Caco-2 (cell line): ENCODE measurements at regions of chr19 and their contacts with region 1.

Region 1: DNA sequence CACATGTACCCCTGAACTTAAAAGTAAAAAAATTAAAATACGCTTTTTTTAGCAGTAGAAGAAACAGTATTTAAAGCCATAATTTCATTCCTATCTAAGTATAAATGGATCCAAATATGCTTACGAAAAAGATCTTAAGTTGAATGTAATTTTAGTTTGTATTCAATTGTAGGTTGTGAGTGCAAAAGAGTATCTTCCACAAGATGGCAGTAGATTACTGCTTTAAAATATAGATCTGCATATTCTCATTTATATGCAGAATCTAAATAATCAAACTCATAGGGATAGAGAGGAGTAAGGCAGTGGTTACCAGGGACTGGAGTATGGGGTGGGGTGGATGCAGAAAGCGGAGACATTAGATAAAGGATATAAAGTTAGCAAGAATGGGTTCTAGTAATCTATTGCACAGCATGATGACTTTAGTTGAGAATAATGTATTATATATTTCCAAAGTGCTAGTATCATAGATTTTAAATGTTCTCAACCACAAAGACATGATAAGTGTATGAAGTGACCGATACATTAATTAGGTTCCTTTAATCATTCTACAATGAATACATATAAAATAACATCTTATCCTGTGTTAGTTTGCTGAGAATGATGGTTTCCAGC is 14.2 kb downstream of the OR7A17 start:
- DNase-seq: no peak
- H3K4me3 ChIP-seq: no peak overlapping the region
- H3K4me3 Mint-ChIP-seq: no peak overlapping the region
- H3K27ac Mint-ChIP-seq: no peak overlapping the region
- H3K4me1 ChIP-seq: no peaks in the 10 kb centered on the region
- H3K4me1 Mint-ChIP-seq: no peaks in the 10 kb centered on the region
- H3K27me3 ChIP-seq: no peaks in the 10 kb centered on the region
- H3K27me3 Mint-ChIP-seq: peaks cover 5% of the 10 kb centered on the region
- CTCF ChIP-seq: peak; percentile 26 to 31

Region 2: DNA sequence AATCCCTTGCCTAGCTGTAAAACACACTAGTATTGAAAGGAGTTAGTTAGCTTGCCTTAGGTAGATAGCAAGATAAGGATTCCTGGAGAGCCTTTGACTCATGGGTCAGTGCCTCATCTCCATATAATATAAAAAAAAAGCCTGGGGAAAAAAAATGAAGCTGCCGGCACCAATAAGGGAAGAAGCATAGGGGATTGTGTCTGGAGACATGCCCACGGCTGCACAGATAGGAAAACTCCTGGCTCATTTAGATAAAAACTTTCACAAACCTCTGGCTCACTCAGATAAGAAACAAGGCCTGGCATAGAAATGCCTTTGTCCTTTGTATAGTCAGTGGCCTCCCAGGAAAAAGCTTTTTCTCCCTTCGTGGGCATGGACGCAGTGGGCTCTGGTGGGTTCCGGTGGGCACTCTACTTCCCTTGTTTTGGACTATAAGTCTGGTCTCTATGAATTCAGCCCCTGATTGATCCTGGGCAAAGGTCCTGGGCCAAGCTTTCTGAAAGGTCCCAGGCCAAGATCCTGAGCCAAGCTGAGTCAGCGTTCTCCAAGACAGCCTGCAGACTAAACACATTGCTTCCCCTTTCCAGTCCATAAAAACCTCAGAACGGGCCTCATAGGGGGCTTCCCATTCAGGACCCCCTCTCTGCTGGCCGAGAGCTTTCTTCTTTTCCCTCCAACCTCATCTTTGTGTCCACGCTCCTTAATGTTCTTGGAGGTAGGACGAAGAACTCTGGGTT is 19.1 kb after region 1 on chr19:
- CTCF ChIA-PET with region 1: no interaction called
- POLR2A ChIA-PET with region 1: no interaction called
- intact Hi-C with region 1: loop called (anchors 1 kb)
- DNase-seq: no peak
- H3K4me3 ChIP-seq: no peak overlapping the region
- H3K4me3 Mint-ChIP-seq: no peak overlapping the region
- H3K27ac Mint-ChIP-seq: no peak overlapping the region
- H3K4me1 ChIP-seq: no peaks in the 10 kb centered on the region
- H3K4me1 Mint-ChIP-seq: no peaks in the 10 kb centered on the region
- H3K27me3 ChIP-seq: no peaks in the 10 kb centered on the region; the same call in 1 of the 2 replicates
- H3K27me3 Mint-ChIP-seq: peaks cover 9% of the 10 kb centered on the region
- CTCF ChIP-seq: no peak